MCF 10A (cell line): ENCODE measurements at regions of chr12 and their contacts with region 1.

Region 1: GRCh38 chr12:6851921-6852650 is at the start of gene USP5:
- DNase-seq: peak; percentile 100
- H3K4me3 Mint-ChIP-seq: peak within 1 kb of the TSS; percentile 88
- H3K27ac Mint-ChIP-seq: peak within 1 kb of the TSS; percentile 90
- H3K4me1 Mint-ChIP-seq: peaks cover 31% of the 10 kb centered on the region
- H3K27me3 Mint-ChIP-seq: no peaks in the 10 kb centered on the region
- CTCF ChIP-seq: no peak
- total RNA-seq, gene USP5: 62.5 and 80.2 TPM in 2 replicates

Region 2: DNA sequence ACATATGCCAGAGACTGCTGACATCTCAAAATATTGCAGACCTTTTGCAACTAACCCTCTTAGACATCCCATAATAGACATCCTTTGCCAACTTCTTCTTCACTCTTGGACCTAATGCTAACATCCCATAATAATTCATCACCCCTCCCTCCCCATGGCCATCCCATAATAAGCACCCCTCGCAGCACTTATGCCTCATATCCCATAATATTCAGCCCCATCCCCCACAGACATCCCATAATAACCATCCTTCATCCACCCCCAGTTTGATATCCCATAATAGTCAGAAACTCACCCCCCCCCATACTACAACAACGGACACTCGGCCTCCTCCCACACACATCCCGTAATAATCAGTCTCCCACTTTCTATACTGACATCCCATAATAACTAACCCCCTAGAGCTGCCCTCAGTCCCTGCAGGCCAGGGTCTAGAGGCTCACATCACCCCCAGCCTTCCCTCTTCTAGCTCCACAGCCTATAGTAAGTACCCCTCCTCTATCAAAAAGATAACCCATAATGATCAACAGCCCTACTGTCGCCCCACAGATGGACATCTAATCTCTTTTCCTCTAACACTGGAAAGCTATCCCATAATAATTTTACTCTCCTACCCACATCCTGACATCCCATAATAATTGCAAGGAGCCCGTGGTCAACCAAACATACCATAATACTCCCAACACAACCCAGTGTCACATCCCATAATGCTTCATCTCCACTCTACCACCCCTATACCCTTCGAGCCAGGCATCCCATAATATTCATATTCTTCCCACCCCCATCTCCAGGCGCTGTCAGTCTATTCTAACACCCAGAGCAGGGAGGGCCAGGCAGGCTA is 244.1 kb before region 1 on chr12:
- CTCF ChIA-PET with region 1: no interaction called
- POLR2A ChIA-PET with region 1: interaction called, 11 read pairs
- intact Hi-C with region 1: no loop called
- DNase-seq: peak; percentile 92
- H3K4me3 Mint-ChIP-seq: no peak overlapping the region
- H3K27ac Mint-ChIP-seq: no peak overlapping the region
- H3K4me1 Mint-ChIP-seq: peaks cover 39% of the 10 kb centered on the region
- H3K27me3 Mint-ChIP-seq: no peaks in the 10 kb centered on the region
- CTCF ChIP-seq: no peak

Region 3: GRCh38 chr12:6723607-6724396 is 128.3 kb before region 1 on chr12 and contains the start of gene COPS7A:
- CTCF ChIA-PET with region 1: no interaction called
- POLR2A ChIA-PET with region 1: interaction called, 36 read pairs
- intact Hi-C with region 1: no loop called
- DNase-seq: peak; percentile 99
- H3K4me3 Mint-ChIP-seq: peak within 1 kb of the TSS; percentile 70
- H3K27ac Mint-ChIP-seq: peak within 1 kb of the TSS; percentile 83
- H3K4me1 Mint-ChIP-seq: no peaks in the 10 kb centered on the region
- H3K27me3 Mint-ChIP-seq: no peaks in the 10 kb centered on the region
- CTCF ChIP-seq: no peak
- total RNA-seq, gene COPS7A: 55.5 and 61.3 TPM in 2 replicates

Region 4: GRCh38 chr12:6825398-6826124 is 26.5 kb before region 1 on chr12:
- CTCF ChIA-PET with region 1: interaction called, 13 read pairs
- POLR2A ChIA-PET with region 1: interaction called, 3 read pairs
- intact Hi-C with region 1: no loop called
- DNase-seq: peak; percentile 84
- H3K4me3 Mint-ChIP-seq: no peak overlapping the region
- H3K27ac Mint-ChIP-seq: no peak overlapping the region
- H3K4me1 Mint-ChIP-seq: peaks cover 29% of the 10 kb centered on the region
- H3K27me3 Mint-ChIP-seq: peaks cover 99% of the 10 kb centered on the region
- CTCF ChIP-seq: peak; percentile 90

Region 5: GRCh38 chr12:6839482-6840201 is 12.4 kb before region 1 on chr12:
- CTCF ChIA-PET with region 1: interaction called, 40 read pairs
- POLR2A ChIA-PET with region 1: interaction called, 6 read pairs
- intact Hi-C with region 1: no loop called
- DNase-seq: no peak
- H3K4me3 Mint-ChIP-seq: no peak overlapping the region
- H3K27ac Mint-ChIP-seq: no peak overlapping the region
- H3K4me1 Mint-ChIP-seq: no peaks in the 10 kb centered on the region
- H3K27me3 Mint-ChIP-seq: no peaks in the 10 kb centered on the region
- CTCF ChIP-seq: no peak

Region 6: DNA sequence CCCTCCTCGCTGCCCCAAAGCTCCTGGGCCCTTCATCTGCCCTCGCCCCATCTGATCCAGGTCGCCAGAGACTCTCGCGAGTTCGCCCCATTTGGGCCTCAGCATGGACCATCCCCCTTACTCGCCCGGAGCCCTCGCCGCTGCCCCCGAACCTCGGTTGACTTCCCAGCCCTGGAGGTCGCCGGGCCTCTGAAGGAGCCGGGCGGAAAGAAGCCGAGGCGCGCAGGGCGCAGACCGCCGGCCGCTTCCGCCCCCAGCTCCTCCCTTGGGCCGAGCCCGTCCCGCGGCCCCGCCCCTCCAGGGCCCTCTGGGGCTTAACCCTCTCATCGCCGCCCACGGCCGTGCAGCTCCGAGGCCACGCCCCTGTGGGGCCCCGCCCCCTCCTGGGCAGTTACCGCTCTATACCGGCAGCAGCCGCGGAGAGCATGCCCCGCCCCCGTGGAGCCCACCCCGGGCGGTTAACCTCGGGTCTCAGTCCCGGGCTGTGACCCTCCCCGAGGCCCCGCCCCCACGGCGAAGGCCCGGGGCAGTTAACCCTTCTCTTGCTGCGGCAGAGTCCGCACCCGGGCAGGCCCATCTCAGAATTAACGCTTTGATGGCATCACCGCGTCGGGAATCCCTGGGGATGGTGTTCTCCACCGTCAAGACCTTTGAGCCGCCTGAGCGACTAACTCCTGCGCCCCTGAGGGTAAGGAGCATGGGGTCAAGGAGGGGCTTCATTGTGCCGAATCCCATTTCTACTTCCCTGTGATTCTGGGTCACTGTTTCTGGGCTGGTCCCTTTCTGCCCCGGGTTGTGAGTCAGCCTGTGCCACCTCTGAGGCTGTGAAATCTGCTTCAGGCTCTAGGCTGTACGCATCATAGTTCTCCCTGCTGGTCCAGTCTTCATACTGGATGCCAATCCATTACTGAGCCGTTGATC is 21.3 kb after region 1 on chr12 and contains the start of gene SPSB2:
- CTCF ChIA-PET with region 1: interaction called, 40 read pairs
- POLR2A ChIA-PET with region 1: interaction called, 130 read pairs
- intact Hi-C with region 1: no loop called
- DNase-seq: peak; percentile 93
- H3K4me3 Mint-ChIP-seq: peak within 1 kb of the TSS; percentile 91
- H3K27ac Mint-ChIP-seq: peak within 1 kb of the TSS; percentile 77
- H3K4me1 Mint-ChIP-seq: peaks cover 24% of the 10 kb centered on the region
- H3K27me3 Mint-ChIP-seq: no peaks in the 10 kb centered on the region
- CTCF ChIP-seq: no peak
- total RNA-seq, gene SPSB2: 9.2 and 10.8 TPM in 2 replicates

Region 7: GRCh38 chr12:6927379-6928024 is 75.4 kb after region 1 on chr12 and contains the start of gene ATN1:
- CTCF ChIA-PET with region 1: interaction called, 12 read pairs
- POLR2A ChIA-PET with region 1: interaction called, 6 read pairs
- intact Hi-C with region 1: no loop called
- DNase-seq: peak; percentile 66
- H3K4me3 Mint-ChIP-seq: peak within 1 kb of the TSS; percentile 91
- H3K27ac Mint-ChIP-seq: peak within 1 kb of the TSS; percentile 92
- H3K4me1 Mint-ChIP-seq: peaks cover 69% of the 10 kb centered on the region
- H3K27me3 Mint-ChIP-seq: no peaks in the 10 kb centered on the region
- CTCF ChIP-seq: no peak
- total RNA-seq, gene ATN1: 83.7 and 84.7 TPM in 2 replicates

Region 8: DNA sequence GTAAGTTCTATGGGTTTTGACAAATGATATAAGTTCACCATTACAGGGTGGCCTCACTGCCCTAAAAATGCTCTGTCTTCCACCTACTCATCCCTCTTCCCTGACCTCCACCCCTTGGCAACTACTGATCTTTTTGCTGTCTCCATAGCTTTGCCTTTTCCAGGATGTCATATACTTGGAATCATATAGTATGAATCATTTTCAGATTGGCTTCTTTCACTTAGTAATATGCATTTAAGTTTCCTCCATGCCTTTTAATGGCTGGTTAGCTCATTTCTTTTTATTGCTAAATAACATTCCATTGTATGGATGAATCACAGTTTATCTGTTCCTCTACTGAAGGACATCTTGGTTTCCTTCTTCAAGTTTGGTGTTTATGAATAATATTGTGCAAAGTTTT is 323.4 kb after region 1 on chr12:
- CTCF ChIA-PET with region 1: no interaction called
- POLR2A ChIA-PET with region 1: no interaction called
- intact Hi-C with region 1: no loop called
- DNase-seq: peak; percentile 16
- H3K4me3 Mint-ChIP-seq: no peak overlapping the region
- H3K27ac Mint-ChIP-seq: no peak overlapping the region
- H3K4me1 Mint-ChIP-seq: peaks cover 8% of the 10 kb centered on the region
- H3K27me3 Mint-ChIP-seq: no peaks in the 10 kb centered on the region
- CTCF ChIP-seq: no peak

Region 9: DNA sequence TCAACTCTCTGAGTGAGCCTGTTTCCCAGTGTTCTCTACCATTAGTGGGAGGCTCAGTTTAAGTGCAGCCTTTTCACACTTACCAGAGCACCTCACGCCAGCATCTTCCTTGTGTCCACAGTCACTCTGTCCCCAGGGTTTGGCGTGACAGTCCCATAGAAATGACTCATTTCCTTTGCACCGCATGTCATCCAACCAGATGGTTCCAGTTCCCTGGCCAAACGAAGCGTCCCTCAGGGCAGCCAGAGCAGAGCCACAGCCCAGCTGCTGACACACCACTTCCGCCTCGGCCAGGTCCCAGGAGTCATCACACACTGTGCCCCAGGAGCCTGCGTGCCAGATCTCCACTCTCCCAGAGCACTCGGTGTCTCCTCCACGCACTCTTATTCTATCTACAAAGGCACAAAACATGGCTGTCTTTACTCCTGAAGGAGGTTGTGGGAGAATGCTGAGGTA is 517.2 kb after region 1 on chr12:
- CTCF ChIA-PET with region 1: no interaction called
- POLR2A ChIA-PET with region 1: no interaction called
- intact Hi-C with region 1: no loop called
- DNase-seq: peak; percentile 59
- H3K4me3 Mint-ChIP-seq: peak overlapping the region; percentile 42
- H3K27ac Mint-ChIP-seq: peak overlapping the region; percentile 37
- H3K4me1 Mint-ChIP-seq: peaks cover 10% of the 10 kb centered on the region
- H3K27me3 Mint-ChIP-seq: no peaks in the 10 kb centered on the region
- CTCF ChIP-seq: no peak